ENCODE measurements at regions of chr11 and their contacts with region 1.

Region 1: GRCh38 chr11:83306200-83307080 is 20.3 kb upstream of the CCDC90B start:
- DNase-seq: no peak
- H3K4me3 ChIP-seq: no peak overlapping the region
- H3K27ac ChIP-seq: no peak overlapping the region
- H3K4me1 ChIP-seq: no peaks in the 10 kb centered on the region; a peak in 1 of 7 replicates
- H3K27me3 ChIP-seq: no peaks in the 10 kb centered on the region
- CTCF ChIP-seq: peak in 2 of 3 experiments; percentile 3 to 51; a peak in 3 of 4 replicates
- EP300 ChIP-seq: no peak
- POLR2A ChIP-seq: no peak
- RAD21 ChIP-seq: peak; percentile 7 to 31; a peak in 2 of 4 replicates

Region 2: DNA sequence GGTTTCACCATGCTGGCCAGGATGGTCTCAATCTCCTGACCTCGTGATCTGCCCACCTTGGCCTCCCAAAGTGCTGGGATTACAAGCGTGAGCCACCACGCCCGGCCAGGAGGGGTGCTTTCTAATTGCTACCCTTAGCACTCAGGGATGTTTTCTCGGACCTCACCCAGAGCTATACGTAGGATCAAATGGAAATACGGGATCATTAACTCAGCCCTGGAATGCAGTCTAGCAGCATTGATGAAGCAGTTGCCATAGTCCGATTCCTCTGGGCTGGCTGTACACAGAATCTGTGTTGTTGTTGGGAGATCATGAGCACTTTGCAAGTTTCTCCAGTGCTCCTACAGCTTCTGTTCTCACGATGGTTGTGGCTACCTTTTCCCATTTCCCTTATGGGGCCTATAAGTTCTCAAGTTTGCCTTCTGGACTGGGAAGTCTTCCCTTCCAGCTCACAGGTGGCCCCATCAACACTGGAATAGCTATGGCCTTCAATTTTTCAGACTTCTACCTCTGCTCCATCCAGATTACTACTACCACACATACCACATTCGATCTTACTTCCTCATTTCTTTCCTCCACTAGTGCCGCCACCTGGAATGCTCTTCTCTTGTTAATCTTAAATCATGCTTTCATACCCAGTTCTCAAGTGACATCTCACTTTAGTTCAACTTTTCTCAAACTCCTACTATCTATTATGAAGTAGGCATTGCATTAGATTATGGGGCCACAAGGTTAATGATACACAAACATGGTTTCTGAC is 165.6 kb before region 1 on chr11:
- CTCF ChIA-PET with region 1: no interaction called
- POLR2A ChIA-PET with region 1: no interaction called
- DNase-seq: no peak
- H3K4me3 ChIP-seq: no peak overlapping the region
- H3K27ac ChIP-seq: no peak overlapping the region
- H3K4me1 ChIP-seq: no peaks in the 10 kb centered on the region
- H3K27me3 ChIP-seq: no peaks in the 10 kb centered on the region
- CTCF ChIP-seq: no peak
- EP300 ChIP-seq: no peak
- POLR2A ChIP-seq: no peak
- RAD21 ChIP-seq: no peak

Region 3: DNA sequence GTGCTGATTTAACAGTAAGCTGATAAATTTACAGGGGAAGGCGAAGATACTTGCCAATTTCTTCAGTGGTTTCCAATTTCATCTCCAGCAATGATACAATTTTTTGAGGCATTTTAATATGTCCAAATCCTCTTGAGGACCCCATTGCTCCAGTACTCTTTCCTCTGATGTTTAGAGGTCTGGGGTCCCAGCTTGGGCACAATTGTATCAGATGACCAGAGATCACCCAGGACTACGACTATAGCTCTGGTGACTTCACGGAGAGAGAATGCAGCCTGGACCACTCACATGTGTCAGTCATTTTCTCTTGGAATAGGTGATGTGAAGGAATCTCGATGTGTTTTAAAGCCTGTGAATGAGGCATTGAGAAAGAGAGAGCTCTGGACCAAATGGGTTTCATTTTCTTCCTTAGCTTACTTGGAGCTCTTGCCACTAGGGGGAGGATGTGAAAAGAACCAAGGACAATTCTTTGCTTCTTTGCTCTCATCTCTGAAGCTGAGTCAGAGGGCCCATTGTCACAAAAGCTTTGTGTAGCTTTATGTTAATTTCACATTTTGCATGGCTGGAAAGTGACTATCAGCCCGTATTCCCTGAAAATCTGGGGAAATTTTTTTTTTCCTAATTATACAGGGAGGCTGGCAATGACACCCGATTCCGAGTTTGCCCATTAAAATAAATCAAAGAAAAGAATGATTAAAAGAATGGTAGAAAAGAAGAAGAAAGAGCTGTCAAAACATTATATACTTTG is 13.6 kb before region 1 on chr11:
- CTCF ChIA-PET with region 1: interaction called, 56 read pairs
- POLR2A ChIA-PET with region 1: no interaction called
- DNase-seq: peak in 1 of 2 experiments; percentile 31
- H3K4me3 ChIP-seq: no peak overlapping the region
- H3K27ac ChIP-seq: no peak overlapping the region
- H3K4me1 ChIP-seq: peaks cover 0 to 5% (median 2%) of the 10 kb centered on the region in 4 experiments; a peak in 2 of 7 replicates
- H3K27me3 ChIP-seq: no peaks in the 10 kb centered on the region
- CTCF ChIP-seq: peak in 2 of 3 experiments; percentile 60 to 83; a peak in 3 of 4 replicates
- EP300 ChIP-seq: no peak
- POLR2A ChIP-seq: no peak
- RAD21 ChIP-seq: peak; percentile 75 to 78

Region 4: DNA sequence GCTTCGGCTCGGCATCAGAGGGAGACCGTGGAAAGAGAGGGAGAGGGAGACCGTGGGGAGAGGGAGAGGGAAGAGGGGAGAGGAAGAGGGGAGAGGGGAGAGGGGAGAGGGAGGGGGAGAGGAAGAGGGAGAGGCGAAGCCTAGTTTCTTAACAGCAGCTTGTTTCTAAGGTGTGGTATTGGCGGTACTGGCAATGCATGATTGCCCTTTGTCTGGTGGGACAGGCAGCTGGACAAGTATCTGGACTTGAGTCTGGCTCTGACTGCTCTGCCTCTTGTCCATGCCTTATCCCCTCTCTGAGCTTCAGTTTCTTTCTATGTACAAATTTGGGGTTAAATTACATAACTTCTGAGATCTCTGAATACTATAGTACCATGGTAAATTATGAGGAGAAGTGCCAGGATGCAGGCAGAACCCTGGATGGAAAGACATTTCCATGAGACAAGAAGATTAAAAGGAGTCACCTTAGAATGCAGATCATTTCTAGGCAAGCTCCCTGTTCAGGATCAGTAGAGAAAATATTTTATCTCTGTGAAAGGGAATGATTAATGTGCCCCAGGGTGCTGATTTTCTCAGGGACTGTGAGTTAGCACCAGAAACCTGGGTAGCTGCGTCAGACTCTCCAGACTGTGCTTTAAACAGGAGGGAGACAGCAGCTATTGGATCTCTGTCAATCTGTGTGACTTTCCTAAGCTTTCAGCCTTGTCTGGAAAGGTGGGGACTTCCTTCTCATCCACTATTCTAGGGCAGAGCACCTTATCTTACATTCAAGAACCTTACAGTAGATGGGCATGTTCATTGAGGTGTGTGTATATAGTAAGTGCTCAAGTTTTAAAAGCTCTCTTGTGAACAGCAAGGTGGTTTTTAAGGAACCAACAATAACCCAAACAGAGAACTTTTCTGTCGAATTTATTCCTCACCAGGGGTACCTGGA is 11.6 kb after region 1 on chr11:
- CTCF ChIA-PET with region 1: interaction called, 13 read pairs
- POLR2A ChIA-PET with region 1: no interaction called
- DNase-seq: no peak
- H3K4me3 ChIP-seq: no peak overlapping the region
- H3K27ac ChIP-seq: no peak overlapping the region
- H3K4me1 ChIP-seq: no peaks in the 10 kb centered on the region
- H3K27me3 ChIP-seq: no peaks in the 10 kb centered on the region
- CTCF ChIP-seq: no peak
- EP300 ChIP-seq: no peak
- POLR2A ChIP-seq: no peak
- RAD21 ChIP-seq: no peak

Region 5: DNA sequence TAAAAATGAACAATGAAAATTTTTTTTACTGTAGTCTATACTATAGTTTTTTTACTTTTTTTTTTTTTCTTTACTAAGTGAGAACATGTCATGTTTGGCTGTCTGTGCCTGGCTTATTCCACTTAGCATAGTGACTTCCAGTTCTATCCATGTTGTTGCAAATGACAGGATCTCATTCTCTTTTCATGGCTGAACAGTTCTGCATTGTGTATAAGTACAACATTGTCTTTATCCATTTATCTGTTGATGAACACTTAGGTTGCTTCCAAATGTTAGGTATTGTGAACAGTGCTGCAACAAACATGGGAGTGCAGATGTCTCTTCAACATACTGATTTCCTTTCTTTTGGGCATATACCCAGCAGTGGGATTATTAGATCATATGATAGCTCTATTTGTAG is 67.9 kb after region 1 on chr11:
- CTCF ChIA-PET with region 1: no interaction called
- POLR2A ChIA-PET with region 1: no interaction called
- DNase-seq: no peak
- H3K4me3 ChIP-seq: no peak overlapping the region
- H3K27ac ChIP-seq: no peak overlapping the region
- H3K4me1 ChIP-seq: no peaks in the 10 kb centered on the region
- H3K27me3 ChIP-seq: no peaks in the 10 kb centered on the region
- CTCF ChIP-seq: no peak
- EP300 ChIP-seq: no peak
- POLR2A ChIP-seq: no peak
- RAD21 ChIP-seq: no peak

Measured in H1 (cell line).